ENCODE measurements at regions of chrX and their contacts with region 1.

Region 1: DNA sequence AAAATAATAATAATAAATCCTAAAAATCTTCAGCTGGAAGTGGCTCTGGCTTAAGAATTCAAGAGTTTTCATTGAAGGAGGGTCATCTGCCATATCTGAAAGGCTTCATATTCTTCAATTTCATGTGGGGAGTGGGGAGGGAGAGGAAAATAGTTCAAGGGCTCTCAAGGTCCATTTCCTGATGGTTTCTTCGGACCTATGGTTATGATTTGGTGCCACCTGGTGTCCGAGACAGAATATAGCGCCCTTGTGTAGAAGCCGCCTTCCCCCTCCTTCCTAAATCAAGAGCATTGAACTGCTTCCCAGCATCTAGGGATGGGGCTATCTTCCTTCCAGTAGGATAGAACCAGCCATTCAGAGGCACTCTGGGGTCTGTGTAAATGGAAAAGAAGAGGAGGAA is 34.3 kb downstream of the NLGN3 start:
- DNase-seq: peak; percentile 39
- ATAC-seq: peak; percentile 49
- H3K4me3 ChIP-seq: no peak overlapping the region
- H3K27ac ChIP-seq: no peak overlapping the region
- H3K4me1 ChIP-seq: peaks cover 3 to 18% of the 10 kb centered on the region in 2 experiments; a peak in 3 of 4 replicates
- H3K27me3 ChIP-seq: no peaks in the 10 kb centered on the region
- CTCF ChIP-seq: peak; percentile 54 to 64 (median 60); a peak in 5 of 6 replicates
- POLR2A ChIP-seq: no peak
- RAD21 ChIP-seq: peak; percentile 83

Region 2: DNA sequence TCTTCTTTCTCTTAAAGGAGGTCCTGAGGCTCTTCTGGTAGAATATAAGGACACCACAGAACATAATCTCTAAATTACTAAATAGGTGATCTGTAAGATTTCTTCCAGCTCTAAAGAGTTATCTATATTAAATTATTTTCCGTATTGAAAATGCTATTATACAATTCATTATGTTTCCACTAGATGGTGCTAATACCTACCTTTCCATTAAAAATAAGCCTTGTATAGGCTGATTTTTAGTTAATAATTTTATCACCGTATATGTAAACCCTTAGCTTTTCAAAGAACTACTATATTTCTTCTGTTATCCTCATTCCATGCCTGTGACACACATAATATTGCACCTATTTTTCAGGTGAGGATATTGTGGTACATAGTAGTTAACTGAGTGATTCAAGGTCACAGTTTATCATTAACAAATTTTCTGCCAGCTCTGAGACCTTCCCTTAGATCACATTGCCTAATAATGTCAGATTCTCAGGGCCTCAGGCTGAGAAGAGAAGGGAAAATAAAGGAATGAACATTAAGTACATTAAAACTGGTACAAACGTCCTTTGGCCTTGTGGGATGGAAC is 409.2 kb before region 1 on chrX:
- CTCF ChIA-PET with region 1: no interaction called
- POLR2A ChIA-PET with region 1: no interaction called
- RAD21 ChIA-PET with region 1: interaction called in 1 of 2 experiments, 4 read pairs
- intact Hi-C with region 1: loop called (anchors 5 kb)
- DNase-seq: no peak
- ATAC-seq: peak; percentile 34; the same call in 1 of the 2 replicates
- H3K4me3 ChIP-seq: no peak overlapping the region
- H3K27ac ChIP-seq: no peak overlapping the region
- H3K4me1 ChIP-seq: no peaks in the 10 kb centered on the region
- H3K27me3 ChIP-seq: no peaks in the 10 kb centered on the region
- CTCF ChIP-seq: peak in 2 of 3 experiments; percentile 37 to 44; a peak in 2 of 6 replicates
- POLR2A ChIP-seq: no peak
- RAD21 ChIP-seq: peak; percentile 57

Region 3: GRCh38 chrX:70970482-70970995 is 208.4 kb before region 1 on chrX:
- CTCF ChIA-PET with region 1: interaction called, 7 read pairs
- POLR2A ChIA-PET with region 1: no interaction called
- RAD21 ChIA-PET with region 1: no interaction called
- intact Hi-C with region 1: loop called (anchors 1 kb)
- DNase-seq: no peak
- ATAC-seq: peak; percentile 73
- H3K4me3 ChIP-seq: peak overlapping the region; percentile 19 to 40
- H3K27ac ChIP-seq: no peak overlapping the region
- H3K4me1 ChIP-seq: peaks cover 0 to 10% of the 10 kb centered on the region in 2 experiments; a peak in 3 of 4 replicates
- H3K27me3 ChIP-seq: no peaks in the 10 kb centered on the region
- CTCF ChIP-seq: peak; percentile 17 to 51 (median 44); a peak in 4 of 6 replicates
- POLR2A ChIP-seq: no peak
- RAD21 ChIP-seq: peak; percentile 55

Region 4: GRCh38 chrX:70998411-70999027 is 180.4 kb before region 1 on chrX:
- CTCF ChIA-PET with region 1: no interaction called
- POLR2A ChIA-PET with region 1: no interaction called
- RAD21 ChIA-PET with region 1: no interaction called
- intact Hi-C with region 1: loop called (anchors 2 kb)
- DNase-seq: no peak
- ATAC-seq: peak; percentile 84
- H3K4me3 ChIP-seq: no peak overlapping the region
- H3K27ac ChIP-seq: no peak overlapping the region
- H3K4me1 ChIP-seq: peaks cover 2 to 6% of the 10 kb centered on the region in 2 experiments; a peak in 1 of 4 replicates
- H3K27me3 ChIP-seq: no peaks in the 10 kb centered on the region
- CTCF ChIP-seq: peak; percentile 27 to 50 (median 44); a peak in 3 of 6 replicates
- POLR2A ChIP-seq: no peak
- RAD21 ChIP-seq: peak; percentile 68

Region 5: DNA sequence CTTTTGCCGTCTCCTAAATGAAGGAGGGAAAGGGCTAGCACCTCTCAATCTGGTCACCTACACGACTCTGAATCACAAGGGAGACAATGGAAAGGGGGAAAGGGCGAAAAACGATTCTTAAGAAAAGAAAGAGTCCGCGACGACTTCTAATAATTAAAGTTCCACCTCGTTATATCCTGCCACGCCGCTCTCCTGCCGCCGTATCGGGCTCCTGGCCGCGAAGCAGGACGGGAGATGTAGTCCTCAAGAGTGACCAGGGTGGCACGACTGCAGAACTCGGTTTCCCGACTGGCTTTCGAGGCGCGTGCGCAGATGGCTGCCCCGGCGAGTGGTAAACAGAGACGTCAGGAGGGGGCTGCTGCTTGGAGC is 83.4 kb before region 1 on chrX and contains the start of gene FOXO4:
- CTCF ChIA-PET with region 1: no interaction called
- POLR2A ChIA-PET with region 1: no interaction called
- RAD21 ChIA-PET with region 1: no interaction called
- intact Hi-C with region 1: loop called (anchors 5 kb)
- DNase-seq: peak; percentile 61
- ATAC-seq: peak; percentile 95
- H3K4me3 ChIP-seq: peak within 1 kb of the TSS; percentile 54 to 64
- H3K27ac ChIP-seq: no peak within 1 kb of the TSS
- H3K4me1 ChIP-seq: peaks cover 0 to 14% of the 10 kb centered on the region in 2 experiments; a peak in 2 of 4 replicates
- H3K27me3 ChIP-seq: no peaks in the 10 kb centered on the region
- CTCF ChIP-seq: no peak
- POLR2A ChIP-seq: no peak
- RAD21 ChIP-seq: no peak
- total RNA-seq, gene FOXO4: 14.7 TPM

Region 6: DNA sequence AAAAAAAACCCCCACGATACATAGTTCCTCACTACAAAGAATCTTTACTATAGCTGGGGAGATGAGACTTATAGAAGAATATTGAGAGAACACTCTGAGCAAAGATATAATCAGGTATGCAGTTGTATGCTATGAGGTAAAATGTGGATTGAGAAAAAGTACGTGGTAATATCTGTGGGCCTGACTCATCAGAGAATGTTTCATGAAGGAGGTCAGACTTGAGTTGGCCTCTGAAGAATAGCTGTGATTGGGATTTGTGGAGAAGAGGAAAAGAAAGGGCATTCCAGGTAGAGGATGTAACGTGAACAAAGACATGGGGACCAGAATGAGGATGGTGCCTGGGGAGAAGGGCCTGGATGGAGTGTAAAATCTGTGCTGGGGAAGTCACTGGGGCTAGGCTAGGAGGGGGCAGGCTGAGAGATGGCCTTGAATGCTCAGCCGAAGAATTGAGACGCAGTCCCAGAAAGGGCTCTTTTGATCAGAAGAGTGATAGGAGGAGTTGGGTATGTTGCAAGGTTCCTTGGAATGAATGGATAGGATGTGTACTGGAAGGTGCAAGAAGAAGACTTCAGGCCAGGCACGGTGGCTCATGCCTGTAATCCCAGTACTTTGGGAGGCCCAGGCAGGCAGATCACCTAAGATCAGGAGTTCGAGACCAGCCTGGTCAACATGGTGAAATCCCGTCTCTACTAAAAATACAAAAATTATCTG is 39.7 kb before region 1 on chrX:
- CTCF ChIA-PET with region 1: no interaction called
- POLR2A ChIA-PET with region 1: no interaction called
- RAD21 ChIA-PET with region 1: no interaction called
- intact Hi-C with region 1: no loop called
- DNase-seq: no peak
- ATAC-seq: no peak
- H3K4me3 ChIP-seq: no peak overlapping the region
- H3K27ac ChIP-seq: no peak overlapping the region
- H3K4me1 ChIP-seq: no peaks in the 10 kb centered on the region
- H3K27me3 ChIP-seq: no peaks in the 10 kb centered on the region
- CTCF ChIP-seq: no peak
- POLR2A ChIP-seq: no peak
- RAD21 ChIP-seq: no peak

Measured in HCT116 (cell line).